ENCODE measurements at regions of chr1 and their contacts with region 1.

Region 1: GRCh38 chr1:231232870-231233734 is 7.9 kb upstream of the GNPAT start:
- DNase-seq: peak in 1 of 2 experiments; percentile 56
- H3K4me3 ChIP-seq: no peak overlapping the region
- H3K4me3 Mint-ChIP-seq: peak overlapping the region; percentile 71
- H3K27ac Mint-ChIP-seq: peak overlapping the region; percentile 96
- H3K4me1 ChIP-seq: peaks cover 49% of the 10 kb centered on the region
- H3K4me1 Mint-ChIP-seq: peaks cover 40% of the 10 kb centered on the region
- H3K27me3 ChIP-seq: no peaks in the 10 kb centered on the region
- H3K27me3 Mint-ChIP-seq: no peaks in the 10 kb centered on the region
- CTCF ChIP-seq: no peak

Region 2: GRCh38 chr1:231039161-231040018 is 193.7 kb before region 1 on chr1:
- CTCF ChIA-PET with region 1: interaction called, 3 read pairs
- POLR2A ChIA-PET with region 1: no interaction called
- intact Hi-C with region 1: loop called (anchors 1 kb)
- DNase-seq: peak; percentile 51 to 64
- H3K4me3 ChIP-seq: peak overlapping the region; percentile 78
- H3K4me3 Mint-ChIP-seq: peak overlapping the region; percentile 81
- H3K27ac Mint-ChIP-seq: peak overlapping the region; percentile 55
- H3K4me1 ChIP-seq: peaks cover 26% of the 10 kb centered on the region
- H3K4me1 Mint-ChIP-seq: peaks cover 35% of the 10 kb centered on the region
- H3K27me3 ChIP-seq: no peaks in the 10 kb centered on the region
- H3K27me3 Mint-ChIP-seq: no peaks in the 10 kb centered on the region
- CTCF ChIP-seq: no peak

Region 3: GRCh38 chr1:231194843-231195516 is 38.1 kb before region 1 on chr1:
- CTCF ChIA-PET with region 1: no interaction called
- POLR2A ChIA-PET with region 1: interaction called, 4 read pairs
- intact Hi-C with region 1: loop called (anchors 1 kb)
- DNase-seq: peak; percentile 82 to 91
- H3K4me3 ChIP-seq: no peak overlapping the region
- H3K4me3 Mint-ChIP-seq: no peak overlapping the region
- H3K27ac Mint-ChIP-seq: no peak overlapping the region
- H3K4me1 ChIP-seq: peaks cover 32% of the 10 kb centered on the region
- H3K4me1 Mint-ChIP-seq: peaks cover 25% of the 10 kb centered on the region
- H3K27me3 ChIP-seq: no peaks in the 10 kb centered on the region
- H3K27me3 Mint-ChIP-seq: no peaks in the 10 kb centered on the region
- CTCF ChIP-seq: no peak

Region 4: DNA sequence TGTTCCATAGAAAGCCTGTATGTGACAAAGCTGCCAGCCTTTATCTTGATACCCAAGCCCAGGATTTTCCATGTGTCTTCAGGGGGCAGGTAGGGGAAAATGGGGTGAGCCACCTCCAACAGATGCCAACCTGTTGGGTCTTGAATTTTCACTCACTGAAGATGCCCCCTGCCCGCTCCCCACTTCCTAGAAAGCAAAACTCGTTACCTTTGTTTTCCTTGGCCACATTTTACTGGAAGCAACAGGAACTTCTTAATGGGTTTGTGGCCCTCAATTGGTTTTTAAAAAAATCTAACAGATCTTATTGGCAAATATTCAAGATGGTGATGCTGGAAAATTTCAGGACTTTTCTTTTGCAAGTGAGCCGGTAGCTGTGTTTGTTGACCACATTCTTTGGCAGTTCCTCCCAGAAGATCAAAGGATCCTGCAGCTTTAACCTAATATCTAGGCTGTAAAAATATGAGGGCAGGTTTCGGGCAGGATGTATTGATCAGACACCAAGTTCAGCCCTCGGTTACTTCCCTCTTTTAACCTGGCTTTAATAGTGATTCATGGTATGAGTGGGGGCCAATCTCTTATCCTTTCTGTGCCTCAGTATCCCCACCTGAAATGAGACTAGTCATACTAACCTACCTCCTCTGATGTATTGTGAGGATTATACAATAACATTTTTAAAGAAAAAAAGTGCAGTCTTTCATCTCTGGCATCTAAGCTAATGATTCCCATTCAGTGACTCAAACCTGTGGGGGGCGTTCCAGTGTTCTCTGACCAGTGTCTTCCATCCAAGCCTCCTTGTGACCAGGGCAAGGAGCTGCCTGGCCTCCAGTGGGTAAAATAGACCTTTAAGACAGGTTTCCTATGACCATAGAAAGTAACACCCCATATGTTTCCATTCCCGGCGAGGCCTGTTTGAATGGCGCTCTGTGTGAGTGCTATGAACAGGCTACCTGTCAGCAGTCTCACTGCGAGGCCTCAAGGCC is 13.4 kb before region 1 on chr1:
- CTCF ChIA-PET with region 1: interaction called, 9 read pairs
- POLR2A ChIA-PET with region 1: interaction called, 9 read pairs
- intact Hi-C with region 1: loop called (anchors 1 kb)
- DNase-seq: peak; percentile 62 to 67
- H3K4me3 ChIP-seq: no peak overlapping the region
- H3K4me3 Mint-ChIP-seq: peak overlapping the region; percentile 14
- H3K27ac Mint-ChIP-seq: peak overlapping the region; percentile 95
- H3K4me1 ChIP-seq: peaks cover 56% of the 10 kb centered on the region
- H3K4me1 Mint-ChIP-seq: peaks cover 39% of the 10 kb centered on the region
- H3K27me3 ChIP-seq: no peaks in the 10 kb centered on the region
- H3K27me3 Mint-ChIP-seq: no peaks in the 10 kb centered on the region
- CTCF ChIP-seq: no peak

Region 5: DNA sequence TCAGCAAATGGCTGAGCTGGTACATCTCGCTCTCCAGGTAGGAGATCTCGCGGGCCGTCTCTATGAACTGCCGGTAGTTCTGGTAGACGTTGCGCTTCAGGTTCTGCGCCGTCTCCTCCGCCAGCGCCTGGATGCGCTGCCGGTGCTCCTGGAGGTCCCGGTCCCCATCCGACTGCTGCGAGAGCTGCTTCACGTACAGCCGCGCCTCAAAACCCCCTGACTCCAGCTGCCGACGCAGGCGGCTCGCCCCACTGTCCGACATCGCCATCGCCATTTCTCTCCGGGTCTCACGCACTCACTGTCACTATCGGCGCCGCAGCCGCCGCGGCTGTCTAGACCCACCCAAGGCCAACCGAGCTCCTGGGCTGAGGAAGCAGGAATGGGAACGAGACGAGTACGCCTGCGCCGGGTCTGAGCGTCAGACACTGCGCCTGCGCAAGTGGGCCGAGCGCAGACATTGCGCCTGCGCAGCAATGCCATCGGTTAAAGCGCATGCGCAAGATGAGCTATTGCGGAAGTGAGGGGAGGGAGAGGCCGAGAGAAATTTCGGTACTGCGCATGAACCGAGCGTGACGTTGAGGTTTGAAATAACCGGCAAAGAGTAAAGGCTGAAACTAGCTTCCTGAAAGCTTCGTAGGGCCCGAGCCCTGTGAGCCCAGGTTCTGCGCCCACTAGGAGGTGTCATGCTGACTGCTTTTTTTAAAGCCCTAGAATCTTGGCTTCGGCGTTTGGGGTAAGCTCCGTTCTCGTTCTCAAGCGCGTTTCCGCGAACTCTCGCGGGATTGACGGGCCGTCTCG is 104.6 kb after region 1 on chr1 and contains the start of gene EXOC8:
- CTCF ChIA-PET with region 1: interaction called, 3 read pairs
- POLR2A ChIA-PET with region 1: interaction called, 14 read pairs
- intact Hi-C with region 1: loop called (anchors 2 kb)
- DNase-seq: peak; percentile 95 to 98
- H3K4me3 ChIP-seq: peak within 1 kb of the TSS; percentile 88
- H3K4me3 Mint-ChIP-seq: peak within 1 kb of the TSS; percentile 98
- H3K27ac Mint-ChIP-seq: peak within 1 kb of the TSS; percentile 98
- H3K4me1 ChIP-seq: peaks cover 6% of the 10 kb centered on the region
- H3K4me1 Mint-ChIP-seq: peaks cover 25% of the 10 kb centered on the region
- H3K27me3 ChIP-seq: no peaks in the 10 kb centered on the region
- H3K27me3 Mint-ChIP-seq: peaks cover 2% of the 10 kb centered on the region
- CTCF ChIP-seq: no peak
- total RNA-seq, gene EXOC8: 17.2 and 18.3 TPM in 2 replicates